Caco-2 (cell line): ENCODE measurements at regions of chr4 and their contacts with region 1.

Region 1: DNA sequence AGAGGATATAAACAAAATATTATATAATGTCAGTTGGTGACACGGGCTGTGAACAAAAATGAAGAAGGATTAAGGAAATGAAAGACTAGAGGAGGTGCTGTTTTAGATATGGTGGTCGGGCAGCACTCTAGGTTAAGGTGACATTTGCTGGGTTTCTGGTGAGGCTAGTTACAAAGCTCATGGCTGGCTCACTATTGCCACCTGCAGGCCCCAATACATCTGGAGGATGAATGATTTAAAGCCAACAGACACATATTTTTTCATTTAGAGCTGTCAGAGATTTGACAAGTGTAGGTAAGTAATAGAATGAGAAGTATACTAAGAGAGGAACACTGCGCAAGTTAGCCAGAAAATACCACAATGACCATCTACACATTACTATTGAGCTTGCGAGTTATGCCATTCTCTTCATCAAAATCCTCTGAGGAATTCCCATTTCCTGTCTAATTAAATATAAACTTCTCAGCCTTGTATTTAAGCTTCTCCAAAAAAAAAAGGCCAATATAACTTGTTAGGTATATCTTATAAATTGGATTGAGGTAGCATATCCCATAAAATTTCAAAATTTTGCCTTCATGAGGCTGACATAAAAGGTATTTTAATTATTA is 6.4 kb upstream of the FGG start:
- DNase-seq: peak; percentile 78 to 79
- H3K4me3 ChIP-seq: no peak overlapping the region
- H3K4me3 Mint-ChIP-seq: no peak overlapping the region
- H3K27ac Mint-ChIP-seq: no peak overlapping the region
- H3K4me1 ChIP-seq: peaks cover 36% of the 10 kb centered on the region
- H3K4me1 Mint-ChIP-seq: peaks cover 17% of the 10 kb centered on the region
- H3K27me3 ChIP-seq: no peaks in the 10 kb centered on the region
- H3K27me3 Mint-ChIP-seq: no peaks in the 10 kb centered on the region
- CTCF ChIP-seq: peak; percentile 59 to 79

Region 2: GRCh38 chr4:154329268-154329868 is 289.4 kb before region 1 on chr4:
- CTCF ChIA-PET with region 1: no interaction called
- POLR2A ChIA-PET with region 1: no interaction called
- intact Hi-C with region 1: loop called (anchors 5 kb)
- DNase-seq: peak in 1 of 2 experiments; percentile 4
- H3K4me3 ChIP-seq: no peak overlapping the region
- H3K4me3 Mint-ChIP-seq: no peak overlapping the region
- H3K27ac Mint-ChIP-seq: no peak overlapping the region
- H3K4me1 ChIP-seq: no peaks in the 10 kb centered on the region
- H3K4me1 Mint-ChIP-seq: no peaks in the 10 kb centered on the region
- H3K27me3 ChIP-seq: no peaks in the 10 kb centered on the region
- H3K27me3 Mint-ChIP-seq: no peaks in the 10 kb centered on the region
- CTCF ChIP-seq: peak; percentile 18 to 34

Region 3: GRCh38 chr4:154551872-154552686 is 66.7 kb before region 1 on chr4:
- CTCF ChIA-PET with region 1: interaction called, 28 read pairs
- POLR2A ChIA-PET with region 1: interaction called, 5 read pairs
- intact Hi-C with region 1: loop called (anchors 1 kb)
- DNase-seq: peak; percentile 71 to 79
- H3K4me3 ChIP-seq: no peak overlapping the region
- H3K4me3 Mint-ChIP-seq: no peak overlapping the region
- H3K27ac Mint-ChIP-seq: no peak overlapping the region
- H3K4me1 ChIP-seq: 0 out of 2 replicates have a peak, but pooled peaks cover 4% of the 10 kb centered on the region
- H3K4me1 Mint-ChIP-seq: peaks cover 18% of the 10 kb centered on the region
- H3K27me3 ChIP-seq: no peaks in the 10 kb centered on the region; the same call in 1 of the 2 replicates
- H3K27me3 Mint-ChIP-seq: no peaks in the 10 kb centered on the region
- CTCF ChIP-seq: peak; percentile 70 to 78

Region 4: DNA sequence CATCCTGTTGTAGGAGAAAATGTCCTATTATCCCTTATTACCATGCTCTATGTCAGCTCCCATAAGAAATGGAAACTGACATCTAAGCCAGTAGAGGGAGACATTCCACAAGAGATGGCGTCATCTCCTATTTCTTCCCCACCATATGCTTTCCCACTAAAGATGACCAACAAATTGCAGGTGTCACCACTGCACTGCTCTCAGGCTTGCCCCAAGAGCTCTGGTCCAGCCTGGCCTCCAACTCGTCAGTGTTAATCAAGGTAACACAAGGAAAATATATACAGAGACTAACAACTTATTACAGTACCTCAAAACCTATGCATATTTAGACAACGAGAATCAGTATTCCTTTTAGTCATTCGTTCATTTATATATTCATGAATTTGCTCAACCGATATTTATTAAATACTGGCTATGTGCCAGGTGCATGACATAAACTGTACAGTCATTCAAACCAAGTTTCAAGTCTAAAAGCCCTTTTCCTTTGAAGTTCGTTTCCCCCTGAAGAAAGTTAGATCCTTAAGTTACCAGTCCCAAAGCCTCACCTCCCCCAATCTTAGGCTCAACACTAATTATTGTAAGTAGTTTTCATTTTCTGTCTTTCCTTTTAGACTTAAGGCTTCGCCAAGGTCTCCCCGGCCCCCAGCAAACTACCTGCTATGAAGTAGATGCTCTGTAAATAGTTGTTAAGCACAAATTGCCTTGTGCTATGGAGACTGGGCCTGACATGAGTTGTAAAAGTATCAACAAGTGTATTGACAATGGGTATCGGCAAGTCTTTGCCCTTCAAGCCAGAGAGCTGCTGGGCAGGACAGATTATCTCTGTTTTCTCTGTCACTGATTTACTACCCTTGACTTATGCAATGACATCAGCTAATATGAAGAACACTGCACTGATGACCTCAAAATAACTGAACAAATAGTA is 59.1 kb before region 1 on chr4:
- CTCF ChIA-PET with region 1: interaction called, 251 read pairs
- POLR2A ChIA-PET with region 1: interaction called, 3 read pairs
- intact Hi-C with region 1: loop called (anchors 1 kb)
- DNase-seq: peak; percentile 69 to 73
- H3K4me3 ChIP-seq: no peak overlapping the region
- H3K4me3 Mint-ChIP-seq: no peak overlapping the region
- H3K27ac Mint-ChIP-seq: peak overlapping the region; percentile 77
- H3K4me1 ChIP-seq: peaks cover 37% of the 10 kb centered on the region
- H3K4me1 Mint-ChIP-seq: peaks cover 22% of the 10 kb centered on the region
- H3K27me3 ChIP-seq: no peaks in the 10 kb centered on the region; the same call in 1 of the 2 replicates
- H3K27me3 Mint-ChIP-seq: no peaks in the 10 kb centered on the region
- CTCF ChIP-seq: peak; percentile 68 to 79

Region 5: DNA sequence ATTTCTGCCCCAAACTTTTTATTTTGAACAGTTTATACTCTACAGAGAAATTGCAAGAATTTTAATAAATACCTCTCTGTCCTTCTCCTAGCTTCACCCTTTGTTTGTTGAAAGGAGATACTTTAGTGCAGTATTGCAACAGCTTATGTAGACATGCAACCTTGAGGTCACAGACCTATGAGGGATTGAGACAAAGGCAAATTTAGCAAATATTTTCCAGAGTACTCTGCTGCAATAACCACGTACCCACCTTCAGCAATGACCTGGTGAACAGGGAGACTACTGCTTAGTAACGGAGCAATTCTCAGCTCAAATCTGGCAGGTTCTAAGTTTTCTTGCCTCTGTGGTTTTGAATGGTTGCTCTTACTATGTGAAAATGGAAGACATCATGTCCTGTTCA is 41.5 kb before region 1 on chr4:
- CTCF ChIA-PET with region 1: interaction called, 5 read pairs
- POLR2A ChIA-PET with region 1: no interaction called
- intact Hi-C with region 1: loop called (anchors 1 kb)
- DNase-seq: peak in 1 of 2 experiments; percentile 34
- H3K4me3 ChIP-seq: no peak overlapping the region
- H3K4me3 Mint-ChIP-seq: no peak overlapping the region
- H3K27ac Mint-ChIP-seq: no peak overlapping the region
- H3K4me1 ChIP-seq: 0 out of 2 replicates have a peak, but pooled peaks cover 5% of the 10 kb centered on the region
- H3K4me1 Mint-ChIP-seq: peaks cover 11% of the 10 kb centered on the region
- H3K27me3 ChIP-seq: no peaks in the 10 kb centered on the region
- H3K27me3 Mint-ChIP-seq: no peaks in the 10 kb centered on the region
- CTCF ChIP-seq: no peak

Region 6: GRCh38 chr4:154590329-154591006 is 28.3 kb before region 1 on chr4 and contains the start of gene FGA:
- CTCF ChIA-PET with region 1: interaction called, 33 read pairs
- POLR2A ChIA-PET with region 1: interaction called, 3 read pairs
- intact Hi-C with region 1: loop called (anchors 1 kb)
- DNase-seq: peak; percentile 80 to 84
- H3K4me3 ChIP-seq: peak within 1 kb of the TSS; percentile 21
- H3K4me3 Mint-ChIP-seq: peak within 1 kb of the TSS; percentile 64
- H3K27ac Mint-ChIP-seq: peak within 1 kb of the TSS; percentile 36
- H3K4me1 ChIP-seq: peaks cover 33% of the 10 kb centered on the region
- H3K4me1 Mint-ChIP-seq: peaks cover 33% of the 10 kb centered on the region
- H3K27me3 ChIP-seq: no peaks in the 10 kb centered on the region
- H3K27me3 Mint-ChIP-seq: no peaks in the 10 kb centered on the region
- CTCF ChIP-seq: no peak
- total RNA-seq, gene FGA: 61.7 and 71.8 TPM in 2 replicates

Region 7: GRCh38 chr4:154595807-154596206 is 23.0 kb before region 1 on chr4:
- CTCF ChIA-PET with region 1: interaction called, 33 read pairs
- POLR2A ChIA-PET with region 1: interaction called, 3 read pairs
- intact Hi-C with region 1: loop called (anchors 1 kb)
- DNase-seq: peak; percentile 70 to 79
- H3K4me3 ChIP-seq: no peak overlapping the region
- H3K4me3 Mint-ChIP-seq: no peak overlapping the region
- H3K27ac Mint-ChIP-seq: no peak overlapping the region
- H3K4me1 ChIP-seq: peaks cover 45% of the 10 kb centered on the region
- H3K4me1 Mint-ChIP-seq: peaks cover 57% of the 10 kb centered on the region
- H3K27me3 ChIP-seq: no peaks in the 10 kb centered on the region
- H3K27me3 Mint-ChIP-seq: no peaks in the 10 kb centered on the region
- CTCF ChIP-seq: no peak

Region 8: DNA sequence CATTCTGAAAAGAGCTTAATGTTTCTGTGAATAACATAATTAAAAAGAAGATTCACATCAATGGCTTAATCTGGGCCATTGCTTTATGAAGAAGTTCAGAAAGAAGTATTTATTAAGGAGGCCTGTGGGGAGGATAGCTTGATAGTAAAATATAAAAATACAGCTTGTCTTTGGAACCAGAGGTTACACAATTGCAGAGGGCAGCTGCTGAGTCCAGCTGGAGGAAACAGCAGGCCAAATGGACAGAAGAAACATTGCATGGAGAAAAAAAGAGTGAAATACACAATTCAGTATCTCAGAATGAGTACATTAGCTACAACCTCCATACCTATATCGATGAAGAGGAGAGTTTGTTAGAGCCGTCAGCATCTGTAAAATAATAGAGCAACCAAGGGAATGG is 441.6 kb after region 1 on chr4:
- CTCF ChIA-PET with region 1: no interaction called
- POLR2A ChIA-PET with region 1: no interaction called
- intact Hi-C with region 1: no loop called
- DNase-seq: no peak
- H3K4me3 ChIP-seq: no peak overlapping the region
- H3K4me3 Mint-ChIP-seq: no peak overlapping the region
- H3K27ac Mint-ChIP-seq: no peak overlapping the region
- H3K4me1 ChIP-seq: no peaks in the 10 kb centered on the region
- H3K4me1 Mint-ChIP-seq: no peaks in the 10 kb centered on the region
- H3K27me3 ChIP-seq: no peaks in the 10 kb centered on the region
- H3K27me3 Mint-ChIP-seq: peaks cover 4% of the 10 kb centered on the region
- CTCF ChIP-seq: no peak